ENCODE measurements at regions of chr2 and their contacts with region 1.

Region 1: GRCh38 chr2:238945433-238946150 is 97.7 kb downstream of the TWIST2 start:
- DNase-seq: peak; percentile 67
- H3K4me3 Mint-ChIP-seq: no peak overlapping the region
- H3K27ac Mint-ChIP-seq: no peak overlapping the region
- H3K4me1 Mint-ChIP-seq: peaks cover 36% of the 10 kb centered on the region
- H3K27me3 Mint-ChIP-seq: no peaks in the 10 kb centered on the region
- CTCF ChIP-seq: peak; percentile 57

Region 2: DNA sequence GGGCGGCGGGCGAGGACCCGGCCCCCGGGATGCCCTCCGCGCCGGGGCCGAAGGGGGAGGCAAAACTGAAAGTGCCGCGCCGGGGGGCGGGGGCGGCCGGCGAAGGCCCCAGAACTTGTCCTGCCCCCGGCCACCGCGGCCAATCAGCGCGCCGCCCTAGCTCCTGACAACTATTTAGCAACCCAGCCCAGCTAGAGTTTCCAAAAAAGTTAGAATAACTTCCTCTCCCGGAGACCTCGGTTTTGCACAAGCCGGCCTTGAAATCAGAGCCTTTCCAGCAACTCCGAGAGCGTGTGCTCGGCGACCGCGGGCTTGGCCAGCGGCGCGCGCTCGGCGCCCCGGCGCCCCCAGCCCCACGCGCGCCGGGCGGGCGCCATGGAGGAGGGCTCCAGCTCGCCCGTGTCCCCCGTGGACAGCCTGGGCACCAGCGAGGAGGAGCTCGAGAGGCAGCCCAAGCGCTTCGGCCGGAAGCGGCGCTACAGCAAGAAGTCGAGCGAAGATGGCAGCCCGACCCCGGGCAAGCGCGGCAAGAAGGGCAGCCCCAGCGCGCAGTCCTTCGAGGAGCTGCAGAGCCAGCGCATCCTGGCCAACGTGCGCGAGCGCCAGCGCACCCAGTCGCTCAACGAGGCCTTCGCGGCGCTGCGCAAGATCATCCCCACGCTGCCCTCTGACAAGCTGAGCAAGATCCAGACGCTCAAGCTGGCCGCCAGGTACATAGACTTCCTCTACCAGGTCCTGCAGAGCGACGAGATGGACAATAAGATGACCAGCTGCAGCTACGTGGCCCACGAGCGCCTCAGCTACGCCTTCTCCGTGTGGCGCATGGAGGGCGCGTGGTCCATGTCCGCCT is 97.5 kb before region 1 on chr2 and contains the start of gene TWIST2:
- CTCF ChIA-PET with region 1: interaction called, 5 read pairs
- POLR2A ChIA-PET with region 1: interaction called, 6 read pairs
- intact Hi-C with region 1: loop called (anchors 2 kb)
- DNase-seq: peak; percentile 90
- H3K4me3 Mint-ChIP-seq: peak within 1 kb of the TSS; percentile 89
- H3K27ac Mint-ChIP-seq: peak within 1 kb of the TSS; percentile 49
- H3K4me1 Mint-ChIP-seq: peaks cover 13% of the 10 kb centered on the region
- H3K27me3 Mint-ChIP-seq: no peaks in the 10 kb centered on the region
- CTCF ChIP-seq: no peak
- total RNA-seq, gene TWIST2: 30.2 and 31.6 TPM in 2 replicates

Region 3: DNA sequence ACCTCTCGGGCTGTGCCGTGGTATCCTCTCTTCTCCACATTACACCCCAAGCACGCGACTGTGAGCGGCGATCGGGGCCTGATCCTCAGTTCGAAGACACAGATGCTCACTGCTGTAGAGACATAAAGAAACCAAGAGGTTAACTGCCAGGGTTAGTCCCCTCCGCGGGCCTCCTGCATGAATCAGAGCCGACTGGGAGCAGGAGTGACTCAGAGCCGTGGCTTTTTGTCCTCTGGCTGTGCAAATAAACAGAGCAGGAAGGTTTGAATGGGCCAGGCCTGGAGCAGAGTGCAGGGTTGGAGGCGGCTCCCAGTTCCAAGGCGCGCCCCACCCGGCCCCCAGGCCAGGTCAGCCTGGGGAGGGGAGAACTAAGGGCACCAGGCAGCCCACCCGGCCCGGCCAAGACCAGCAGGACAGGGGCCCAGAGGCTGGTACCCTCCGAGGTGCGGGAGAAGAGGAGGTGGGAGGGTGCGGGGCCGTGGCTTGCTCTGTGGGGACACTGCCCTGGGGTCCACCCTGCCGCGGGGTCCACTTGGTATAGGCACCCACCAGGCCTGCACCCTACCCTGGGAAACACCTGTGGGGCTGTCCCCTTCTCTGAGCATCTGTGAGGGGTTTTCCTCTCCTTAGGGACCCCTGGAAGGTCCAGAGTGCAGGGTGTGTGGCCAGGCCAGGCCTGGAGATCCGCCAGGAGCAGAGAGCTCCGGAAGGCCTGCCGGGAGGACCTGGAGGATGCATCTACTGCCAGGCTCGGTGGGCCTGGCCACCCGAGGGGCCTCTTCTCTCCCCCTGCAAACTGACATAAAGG is 81.2 kb before region 1 on chr2:
- CTCF ChIA-PET with region 1: interaction called, 3 read pairs
- POLR2A ChIA-PET with region 1: interaction called, 3 read pairs
- intact Hi-C with region 1: loop called (anchors 5 kb)
- DNase-seq: peak; percentile 98
- H3K4me3 Mint-ChIP-seq: peak overlapping the region; percentile 61
- H3K27ac Mint-ChIP-seq: peak overlapping the region; percentile 95
- H3K4me1 Mint-ChIP-seq: peaks cover 59% of the 10 kb centered on the region
- H3K27me3 Mint-ChIP-seq: no peaks in the 10 kb centered on the region
- CTCF ChIP-seq: no peak

Region 4: DNA sequence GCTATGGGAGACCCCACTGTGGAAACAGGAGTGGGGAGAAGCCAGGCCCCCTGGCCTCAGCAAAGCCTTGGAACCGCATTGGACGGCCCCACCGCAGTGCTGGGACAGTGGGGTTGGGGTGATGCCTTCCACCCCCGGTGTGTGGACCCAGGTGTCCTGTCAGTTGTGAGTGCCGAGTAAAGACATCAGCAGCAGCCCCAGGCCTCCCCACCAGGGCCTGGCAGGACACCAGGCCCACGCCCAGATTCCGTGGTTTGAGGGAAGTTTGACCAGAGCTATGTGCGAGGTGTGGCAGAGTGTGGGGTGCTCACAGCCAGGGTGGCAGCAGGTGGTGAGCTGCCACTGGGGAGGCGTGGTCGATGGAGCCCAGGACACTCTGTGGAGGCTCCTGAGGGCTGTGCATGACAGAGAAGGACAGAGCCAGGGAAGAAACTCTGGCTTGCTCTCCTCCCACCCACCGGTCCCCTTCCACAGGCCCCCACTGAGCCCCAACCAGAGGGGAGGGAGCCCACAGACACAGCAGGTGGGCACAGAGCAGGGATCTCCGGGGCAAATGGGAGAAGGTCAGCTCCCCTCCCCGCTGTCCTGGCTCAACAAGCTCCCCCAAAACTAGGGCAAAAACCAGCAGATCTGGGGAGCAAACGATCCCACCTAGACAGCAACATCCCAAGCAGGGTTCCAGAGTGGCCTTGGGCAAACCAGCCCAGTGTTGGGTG is 28.6 kb before region 1 on chr2:
- CTCF ChIA-PET with region 1: no interaction called
- POLR2A ChIA-PET with region 1: interaction called, 3 read pairs
- intact Hi-C with region 1: loop called (anchors 1 kb)
- DNase-seq: no peak
- H3K4me3 Mint-ChIP-seq: no peak overlapping the region
- H3K27ac Mint-ChIP-seq: peak overlapping the region; percentile 28
- H3K4me1 Mint-ChIP-seq: peaks cover 33% of the 10 kb centered on the region
- H3K27me3 Mint-ChIP-seq: no peaks in the 10 kb centered on the region
- CTCF ChIP-seq: no peak